ENCODE measurements at regions of chr6 and their contacts with region 1.

Region 1: DNA sequence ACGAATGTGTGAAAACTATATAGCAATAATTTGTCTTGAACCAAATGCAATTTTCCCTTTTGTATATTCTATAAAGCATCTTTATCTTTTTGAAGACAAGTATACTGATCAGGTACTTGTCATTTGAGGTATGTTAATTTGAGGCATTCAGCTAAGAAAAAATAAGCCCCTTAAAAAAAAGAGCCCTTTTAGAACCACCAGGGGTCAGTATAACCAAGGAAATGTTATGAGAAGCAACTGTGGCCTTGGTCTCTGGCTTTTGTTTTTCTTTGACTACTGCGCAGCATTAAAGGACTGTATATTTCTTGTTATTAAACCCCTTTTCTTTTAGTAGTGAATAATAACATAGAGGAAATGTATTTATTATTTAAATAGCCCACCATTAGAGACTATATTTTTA is 43.1 kb downstream of the CD109 start:
- H3K4me3 Mint-ChIP-seq: no peak overlapping the region
- H3K27ac Mint-ChIP-seq: no peak overlapping the region
- H3K4me1 Mint-ChIP-seq: peaks cover 5% of the 10 kb centered on the region
- H3K27me3 Mint-ChIP-seq: no peaks in the 10 kb centered on the region

Region 2: GRCh38 chr6:73854998-73855718 is 116.1 kb after region 1 on chr6:
- intact Hi-C with region 1: loop called (anchors 2 kb)
- H3K4me3 Mint-ChIP-seq: no peak overlapping the region
- H3K27ac Mint-ChIP-seq: no peak overlapping the region
- H3K4me1 Mint-ChIP-seq: no peaks in the 10 kb centered on the region
- H3K27me3 Mint-ChIP-seq: no peaks in the 10 kb centered on the region

Region 3: DNA sequence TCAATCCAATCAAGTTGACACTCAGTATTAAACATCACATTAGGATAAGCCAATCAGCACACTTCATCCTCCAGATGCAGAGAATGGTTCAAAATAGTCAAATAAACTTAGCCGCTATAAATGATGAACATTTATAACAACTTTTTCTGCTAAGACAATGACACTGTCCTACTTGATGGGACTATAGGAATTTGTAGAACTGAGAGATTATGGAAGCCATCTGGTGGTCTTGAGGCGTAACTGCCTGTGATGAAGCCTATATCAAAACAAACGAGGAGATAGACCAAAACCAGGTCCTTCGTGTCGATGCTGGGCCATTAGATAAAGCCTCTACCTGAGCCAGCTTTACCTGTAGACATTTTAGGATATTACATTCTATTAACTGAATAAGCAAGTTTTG is 835.7 kb after region 1 on chr6:
- intact Hi-C with region 1: loop called (anchors 5 kb)
- H3K4me3 Mint-ChIP-seq: no peak overlapping the region
- H3K27ac Mint-ChIP-seq: no peak overlapping the region
- H3K4me1 Mint-ChIP-seq: no peaks in the 10 kb centered on the region
- H3K27me3 Mint-ChIP-seq: no peaks in the 10 kb centered on the region